ENCODE measurements at regions of chr1 and their contacts with region 1.

Region 1: DNA sequence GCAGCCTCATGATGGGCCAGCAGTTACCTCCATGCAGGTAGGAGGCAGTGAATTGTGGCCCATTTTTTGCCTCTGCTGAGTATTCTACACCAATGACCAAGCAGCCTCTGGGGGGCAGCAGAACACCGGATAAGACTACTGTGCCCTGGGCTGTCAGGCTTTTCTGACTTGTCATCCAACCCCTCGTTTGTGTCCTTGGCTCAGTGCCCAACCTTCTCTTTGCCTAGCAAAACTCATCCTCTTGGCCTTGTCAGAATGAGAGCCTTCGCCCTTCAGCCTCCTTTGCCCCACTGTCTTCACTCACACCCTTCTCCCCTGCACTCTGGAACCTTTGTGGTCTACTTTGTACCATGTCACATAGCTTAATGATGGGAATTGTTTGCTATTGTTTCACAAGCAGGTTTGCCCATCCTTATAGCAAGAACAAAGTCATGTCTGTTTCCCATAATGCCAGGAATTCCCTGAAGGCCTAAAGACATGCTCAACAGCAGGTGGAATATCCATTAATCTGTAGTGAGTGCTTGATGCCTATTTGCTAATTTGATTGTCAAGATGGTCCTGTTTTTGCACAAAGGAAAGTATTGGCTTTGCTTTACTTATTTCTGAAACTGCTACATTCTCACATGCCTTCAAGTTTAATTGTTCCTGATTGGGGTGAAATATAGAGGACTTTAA is 255.9 kb downstream of the HHAT start:
- DNase-seq: peak; percentile 38 to 60 (median 52)
- H3K4me3 ChIP-seq: no peak overlapping the region
- H3K4me3 Mint-ChIP-seq: no peak overlapping the region
- H3K27ac ChIP-seq: no peak overlapping the region
- H3K27ac Mint-ChIP-seq: no peak overlapping the region
- H3K4me1 ChIP-seq: no peaks in the 10 kb centered on the region
- H3K4me1 Mint-ChIP-seq: no peaks in the 10 kb centered on the region
- H3K27me3 ChIP-seq: no peaks in the 10 kb centered on the region
- H3K27me3 Mint-ChIP-seq: peaks cover 2 to 8% (median 3%) of the 10 kb centered on the region in 3 donors
- CTCF ChIP-seq: peak; percentile 73

Region 2: GRCh38 chr1:210951279-210951678 is 366.7 kb after region 1 on chr1:
- intact Hi-C with region 1: loop called in 1 of 2 experiments (anchors 5 kb)
- DNase-seq: no peak
- H3K4me3 ChIP-seq: no peak overlapping the region
- H3K4me3 Mint-ChIP-seq: no peak overlapping the region
- H3K27ac ChIP-seq: no peak overlapping the region
- H3K27ac Mint-ChIP-seq: no peak overlapping the region
- H3K4me1 ChIP-seq: no peaks in the 10 kb centered on the region
- H3K4me1 Mint-ChIP-seq: no peaks in the 10 kb centered on the region
- H3K27me3 ChIP-seq: no peaks in the 10 kb centered on the region
- H3K27me3 Mint-ChIP-seq: peaks cover 0 to 5% (median 0%) of the 10 kb centered on the region in 3 donors
- CTCF ChIP-seq: no peak

Region 3: DNA sequence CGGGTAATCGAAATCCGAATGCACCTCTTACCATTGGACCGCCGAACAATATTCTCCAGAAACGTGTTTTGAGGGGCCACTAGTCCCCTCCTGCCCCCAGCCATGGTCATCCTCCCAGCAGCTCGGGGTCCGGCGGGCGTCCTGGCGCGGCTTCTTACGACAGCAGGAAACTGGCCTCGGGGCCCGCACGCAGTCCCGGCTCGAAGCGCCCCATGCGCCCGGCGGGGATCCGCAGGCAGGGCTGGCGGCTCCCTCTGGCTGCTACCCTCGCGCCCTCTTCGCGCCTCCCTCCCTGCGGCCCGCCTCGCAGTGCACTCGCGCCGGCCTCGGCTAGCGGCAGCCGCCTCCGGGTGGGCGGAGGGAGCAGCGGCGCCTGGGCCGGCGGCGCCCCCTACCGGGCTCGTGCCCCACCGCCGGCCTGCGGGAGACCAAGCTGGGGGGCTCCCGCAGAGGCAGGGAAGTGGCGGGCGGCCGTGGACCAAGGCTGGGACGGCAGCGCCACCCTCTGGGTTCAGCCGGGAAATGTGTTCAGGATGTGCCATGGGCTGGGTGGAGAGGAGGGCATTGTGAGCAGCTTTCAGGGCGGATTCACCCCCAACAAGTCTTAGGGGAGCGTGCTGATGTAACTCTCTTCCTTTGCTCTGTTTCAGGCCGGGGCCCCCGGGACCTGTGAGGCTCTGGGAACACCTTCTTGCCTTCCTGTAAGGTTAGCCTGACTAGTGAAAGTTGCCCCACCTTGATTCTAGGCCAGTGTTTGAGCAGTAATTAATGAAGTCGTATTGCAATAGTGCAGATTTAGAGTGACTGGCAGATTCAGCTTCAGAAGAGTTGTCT is 549.5 kb after region 1 on chr1 and contains the start of gene KCNH1:
- intact Hi-C with region 1: loop called in 1 of 2 experiments (anchors 10 kb)
- DNase-seq: peak; percentile 12 to 31 (median 20)
- H3K4me3 ChIP-seq: peak within 1 kb of the TSS in 1 of 3 experiments; percentile 42
- H3K4me3 Mint-ChIP-seq: peak within 1 kb of the TSS; percentile 58 to 87
- H3K27ac ChIP-seq: no peak within 1 kb of the TSS
- H3K27ac Mint-ChIP-seq: no peak within 1 kb of the TSS
- H3K4me1 ChIP-seq: peaks cover 4 to 11% of the 10 kb centered on the region in 2 donors
- H3K4me1 Mint-ChIP-seq: peaks cover 5% of the 10 kb centered on the region
- H3K27me3 ChIP-seq: peaks cover 51 to 57% of the 10 kb centered on the region in 2 donors
- H3K27me3 Mint-ChIP-seq: peaks cover 39 to 60% (median 41%) of the 10 kb centered on the region in 3 donors
- CTCF ChIP-seq: peak; percentile 74
- polyA plus RNA-seq, gene KCNH1: not detected

Measured in CD14-positive monocyte (primary cell).